Breast epithelium (tissue), 4 donors: ENCODE measurements at regions of chr15 and their contacts with region 1.

Region 1: GRCh38 chr15:34154725-34155204 is 52.9 kb downstream of the PGBD4 start:
- DNase-seq: no peak
- H3K4me3 ChIP-seq: no peak overlapping the region
- H3K27ac ChIP-seq: no peak overlapping the region
- H3K4me1 ChIP-seq: no peaks in the 10 kb centered on the region
- H3K27me3 ChIP-seq: no peaks in the 10 kb centered on the region
- CTCF ChIP-seq: no peak
- POLR2A ChIP-seq: no peak

Region 2: GRCh38 chr15:32651229-32651837 is 1503.4 kb before region 1 on chr15:
- intact Hi-C with region 1: loop called (anchors 10 kb)
- DNase-seq: no peak
- H3K4me3 ChIP-seq: no peak overlapping the region
- H3K27ac ChIP-seq: no peak overlapping the region
- H3K4me1 ChIP-seq: no peaks in the 10 kb centered on the region
- H3K27me3 ChIP-seq: no peaks in the 10 kb centered on the region
- CTCF ChIP-seq: peak in 2 of 3 donors; percentile 54 to 60
- POLR2A ChIP-seq: no peak

Region 3: DNA sequence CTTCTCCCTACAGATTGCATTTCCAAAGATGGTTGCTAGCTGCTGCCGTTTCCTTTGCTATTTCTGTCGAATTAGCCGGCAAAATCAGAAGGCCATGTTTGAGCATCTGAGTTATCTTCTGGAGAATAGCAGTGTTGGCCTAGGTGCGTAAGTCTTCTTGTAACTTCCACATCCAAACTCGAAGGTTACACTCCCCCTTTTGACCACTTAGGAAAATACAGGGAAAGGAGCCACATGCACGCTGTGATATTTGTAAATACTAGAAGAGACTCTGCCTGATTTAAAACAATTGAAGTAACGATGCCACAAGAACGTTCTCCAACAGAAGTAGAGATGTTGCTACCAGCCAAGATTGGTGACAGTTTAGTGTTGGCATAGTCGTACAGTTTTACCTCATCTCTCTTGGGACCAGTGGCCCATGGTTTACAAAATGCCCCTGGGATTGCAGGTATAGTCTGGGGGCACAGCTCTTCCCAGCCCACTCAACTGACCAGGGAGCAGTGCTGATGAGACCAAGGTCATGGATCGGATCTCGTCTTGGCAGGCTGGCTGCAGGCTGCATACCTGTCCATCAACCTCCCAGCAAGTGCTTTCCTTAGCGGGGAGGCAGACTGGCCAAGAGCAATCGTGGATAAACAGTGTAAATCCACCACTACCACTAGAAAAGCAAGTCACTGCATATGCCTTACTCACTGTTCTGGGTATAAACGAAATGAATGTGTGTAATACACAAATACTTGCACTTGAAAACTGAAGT is 454.9 kb before region 1 on chr15:
- intact Hi-C with region 1: no loop called
- DNase-seq: no peak
- H3K4me3 ChIP-seq: no peak overlapping the region
- H3K27ac ChIP-seq: no peak overlapping the region
- H3K4me1 ChIP-seq: no peaks in the 10 kb centered on the region
- H3K27me3 ChIP-seq: no peaks in the 10 kb centered on the region
- CTCF ChIP-seq: no peak
- POLR2A ChIP-seq: no peak

Region 4: DNA sequence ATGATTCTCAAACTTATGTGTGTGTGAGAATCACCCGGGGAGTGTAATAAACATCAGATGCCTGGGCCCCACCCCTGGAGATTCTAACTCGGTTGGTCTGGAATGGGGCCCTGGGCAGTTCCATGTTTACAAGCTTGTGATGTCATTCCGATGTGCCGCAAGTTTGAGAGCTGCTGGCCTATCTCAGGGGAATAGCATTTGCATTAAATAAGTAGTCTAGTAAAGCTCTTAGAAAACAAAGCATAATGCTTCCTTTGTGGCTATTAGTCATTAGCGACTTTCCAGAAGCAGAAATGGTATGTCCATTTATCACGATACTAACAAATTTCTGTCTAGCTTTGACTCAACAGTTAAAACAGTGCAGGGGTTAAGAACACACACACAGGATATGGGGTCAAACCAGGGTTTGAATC is 32.0 kb before region 1 on chr15:
- intact Hi-C with region 1: no loop called
- DNase-seq: no peak
- H3K4me3 ChIP-seq: no peak overlapping the region
- H3K27ac ChIP-seq: no peak overlapping the region
- H3K4me1 ChIP-seq: no peaks in the 10 kb centered on the region
- H3K27me3 ChIP-seq: no peaks in the 10 kb centered on the region
- CTCF ChIP-seq: no peak
- POLR2A ChIP-seq: no peak

Region 5: DNA sequence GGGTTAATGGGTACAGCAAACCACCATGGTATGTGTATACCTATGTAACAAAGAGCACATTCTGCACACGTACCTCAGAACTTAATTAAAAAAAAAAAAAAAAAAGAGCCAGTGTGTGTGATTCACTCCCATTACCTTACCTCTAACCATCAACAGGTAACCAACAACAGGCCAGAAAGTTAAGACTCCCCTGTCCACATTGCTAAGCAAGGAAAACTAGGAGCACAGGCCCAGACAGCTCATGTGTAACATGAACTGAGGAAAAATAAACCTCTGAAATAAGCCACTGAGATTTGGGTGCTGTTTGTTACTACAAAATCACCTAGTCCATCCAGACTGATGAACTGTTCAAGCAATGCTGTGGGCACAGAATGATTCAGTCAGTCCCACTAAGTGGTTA is 49.2 kb after region 1 on chr15:
- intact Hi-C with region 1: loop called (anchors 2 kb)
- DNase-seq: no peak
- H3K4me3 ChIP-seq: no peak overlapping the region
- H3K27ac ChIP-seq: no peak overlapping the region
- H3K4me1 ChIP-seq: no peaks in the 10 kb centered on the region
- H3K27me3 ChIP-seq: no peaks in the 10 kb centered on the region
- CTCF ChIP-seq: no peak
- POLR2A ChIP-seq: no peak

Region 6: GRCh38 chr15:34327906-34328305 is 173.1 kb after region 1 on chr15:
- intact Hi-C with region 1: no loop called
- DNase-seq: no peak
- H3K4me3 ChIP-seq: no peak overlapping the region
- H3K27ac ChIP-seq: no peak overlapping the region
- H3K4me1 ChIP-seq: no peaks in the 10 kb centered on the region
- H3K27me3 ChIP-seq: no peaks in the 10 kb centered on the region
- CTCF ChIP-seq: no peak
- POLR2A ChIP-seq: no peak